Activated CD4-positive, alpha-beta memory T cell treated with anti-CD3 and anti-CD28 coated beads for 36 hours (primary cell): ENCODE measurements at regions of chr7 and their contacts with region 1.

Region 1: DNA sequence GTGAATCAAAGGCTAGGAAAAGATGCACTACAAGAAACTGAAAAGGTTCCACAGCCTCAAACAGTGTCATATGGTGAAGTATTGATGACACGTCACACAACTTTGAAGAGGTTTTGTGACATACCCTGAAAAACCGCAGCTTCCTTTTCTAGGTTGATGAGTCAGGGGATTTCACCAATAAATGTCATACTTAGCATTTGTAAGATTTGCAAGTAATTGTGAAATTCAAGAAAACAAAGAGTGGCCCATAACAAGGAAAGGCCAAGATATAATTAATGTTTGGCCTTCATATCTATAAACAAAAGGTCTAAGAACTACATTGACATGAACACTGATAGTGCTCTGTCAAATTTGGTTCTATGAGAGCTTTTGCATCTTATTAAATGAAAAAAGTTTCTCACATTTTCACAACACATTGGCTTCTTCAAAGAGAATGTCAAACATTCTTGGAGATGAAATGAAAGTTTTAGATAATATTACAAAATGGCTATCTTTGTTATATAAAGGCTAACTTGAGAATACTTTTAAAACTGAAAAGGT is 62.0 kb upstream of the NAMPT start:
- DNase-seq: peak; percentile 61
- H3K4me3 Mint-ChIP-seq: peak overlapping the region; percentile 59
- H3K27ac Mint-ChIP-seq: peak overlapping the region; percentile 99
- H3K4me1 Mint-ChIP-seq: peaks cover 60% of the 10 kb centered on the region
- H3K27me3 Mint-ChIP-seq: peaks cover 4% of the 10 kb centered on the region

Region 2: GRCh38 chr7:104943502-104944343 is 1403.0 kb before region 1 on chr7:
- CTCF ChIA-PET with region 1: no interaction called
- POLR2A ChIA-PET with region 1: no interaction called
- intact Hi-C with region 1: loop called (anchors 10 kb)
- DNase-seq: peak; percentile 89
- H3K4me3 Mint-ChIP-seq: peak overlapping the region; percentile 89
- H3K27ac Mint-ChIP-seq: peak overlapping the region; percentile 98
- H3K4me1 Mint-ChIP-seq: peaks cover 62% of the 10 kb centered on the region
- H3K27me3 Mint-ChIP-seq: no peaks in the 10 kb centered on the region

Region 3: GRCh38 chr7:106260136-106260561 is 86.6 kb before region 1 on chr7:
- CTCF ChIA-PET with region 1: no interaction called
- POLR2A ChIA-PET with region 1: no interaction called
- intact Hi-C with region 1: loop called (anchors 1 kb)
- DNase-seq: no peak
- H3K4me3 Mint-ChIP-seq: no peak overlapping the region
- H3K27ac Mint-ChIP-seq: peak overlapping the region; percentile 78
- H3K4me1 Mint-ChIP-seq: peaks cover 75% of the 10 kb centered on the region
- H3K27me3 Mint-ChIP-seq: no peaks in the 10 kb centered on the region

Region 4: DNA sequence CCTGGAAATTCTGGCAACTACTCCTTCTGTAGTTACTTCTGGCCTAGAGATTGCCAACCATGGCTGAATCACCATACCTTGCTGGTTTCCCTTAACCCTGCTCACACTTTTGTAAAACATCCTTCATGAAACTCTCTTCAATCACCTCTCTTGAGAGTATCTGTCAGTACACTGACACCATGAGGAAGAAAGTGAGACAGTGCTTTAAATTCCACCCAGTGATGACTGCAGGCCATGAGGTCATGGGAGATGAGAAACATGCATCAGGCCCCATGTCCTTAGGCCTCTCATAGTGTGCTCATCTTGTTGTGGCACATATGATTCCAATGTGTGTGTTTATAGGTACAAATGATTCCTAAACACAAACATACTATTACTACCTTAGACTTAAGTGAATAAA is 37.4 kb before region 1 on chr7:
- CTCF ChIA-PET with region 1: no interaction called
- POLR2A ChIA-PET with region 1: no interaction called
- intact Hi-C with region 1: loop called (anchors 1 kb)
- DNase-seq: peak; percentile 52
- H3K4me3 Mint-ChIP-seq: no peak overlapping the region
- H3K27ac Mint-ChIP-seq: peak overlapping the region; percentile 38
- H3K4me1 Mint-ChIP-seq: peaks cover 27% of the 10 kb centered on the region
- H3K27me3 Mint-ChIP-seq: peaks cover 14% of the 10 kb centered on the region

Region 5: GRCh38 chr7:106405697-106406141 is 59.0 kb after region 1 on chr7:
- CTCF ChIA-PET with region 1: no interaction called
- POLR2A ChIA-PET with region 1: interaction called, 12 read pairs
- intact Hi-C with region 1: loop called (anchors 1 kb)
- DNase-seq: peak; percentile 48
- H3K4me3 Mint-ChIP-seq: peak overlapping the region; percentile 1
- H3K27ac Mint-ChIP-seq: peak overlapping the region; percentile 19
- H3K4me1 Mint-ChIP-seq: peaks cover 31% of the 10 kb centered on the region
- H3K27me3 Mint-ChIP-seq: peaks cover 10% of the 10 kb centered on the region

Region 6: DNA sequence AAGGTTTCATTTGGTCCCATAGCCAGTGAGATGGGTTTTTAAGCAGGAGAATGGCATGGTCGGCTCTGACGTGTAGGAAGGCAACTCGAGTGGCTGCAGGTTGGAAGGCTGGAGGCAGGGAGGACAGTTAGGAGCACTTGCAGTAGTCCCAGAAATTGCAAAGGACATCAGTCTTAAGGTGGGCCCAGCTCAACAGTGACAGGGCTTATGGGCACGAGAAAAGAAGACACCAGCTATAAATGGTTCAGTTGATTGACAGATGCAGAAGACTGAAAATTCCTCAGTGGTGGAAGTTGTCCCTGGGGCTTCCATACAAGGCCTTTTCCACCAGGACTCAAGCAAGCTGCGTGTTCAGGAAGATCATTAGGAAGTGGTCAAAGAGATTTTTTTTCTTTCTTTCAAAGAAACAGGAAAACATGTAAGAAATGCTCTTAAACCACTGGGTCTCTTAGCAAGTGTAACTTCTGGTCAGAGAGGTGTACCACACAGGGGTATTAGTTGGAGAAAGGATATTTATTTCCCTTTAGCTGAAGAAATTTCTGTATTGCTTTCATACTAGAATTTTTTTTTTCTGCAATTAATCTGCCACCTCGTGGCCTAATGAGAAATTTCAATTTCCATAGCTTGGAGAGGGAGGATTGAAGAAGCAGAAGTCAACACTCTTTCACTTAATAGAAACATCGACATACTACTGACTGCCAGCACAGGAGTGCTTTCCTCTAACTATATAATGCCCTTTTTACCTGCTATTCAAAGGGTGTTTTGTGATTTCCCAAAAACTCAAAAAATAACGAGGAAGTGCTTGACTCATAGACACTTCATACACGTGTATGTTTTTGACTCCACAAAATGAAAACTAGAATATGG is 115.5 kb after region 1 on chr7:
- CTCF ChIA-PET with region 1: interaction called, 7 read pairs
- POLR2A ChIA-PET with region 1: interaction called, 17 read pairs
- intact Hi-C with region 1: loop called (anchors 1 kb)
- DNase-seq: no peak
- H3K4me3 Mint-ChIP-seq: no peak overlapping the region
- H3K27ac Mint-ChIP-seq: peak overlapping the region; percentile 7
- H3K4me1 Mint-ChIP-seq: peaks cover 25% of the 10 kb centered on the region
- H3K27me3 Mint-ChIP-seq: no peaks in the 10 kb centered on the region

Region 7: GRCh38 chr7:106767498-106768323 is 421.0 kb after region 1 on chr7:
- CTCF ChIA-PET with region 1: no interaction called
- POLR2A ChIA-PET with region 1: no interaction called
- intact Hi-C with region 1: loop called (anchors 2 kb)
- DNase-seq: peak; percentile 18
- H3K4me3 Mint-ChIP-seq: peak overlapping the region; percentile 42
- H3K27ac Mint-ChIP-seq: peak overlapping the region; percentile 65
- H3K4me1 Mint-ChIP-seq: peaks cover 49% of the 10 kb centered on the region
- H3K27me3 Mint-ChIP-seq: no peaks in the 10 kb centered on the region